ENCODE measurements at regions of chr1 and their contacts with region 1.

Region 1: DNA sequence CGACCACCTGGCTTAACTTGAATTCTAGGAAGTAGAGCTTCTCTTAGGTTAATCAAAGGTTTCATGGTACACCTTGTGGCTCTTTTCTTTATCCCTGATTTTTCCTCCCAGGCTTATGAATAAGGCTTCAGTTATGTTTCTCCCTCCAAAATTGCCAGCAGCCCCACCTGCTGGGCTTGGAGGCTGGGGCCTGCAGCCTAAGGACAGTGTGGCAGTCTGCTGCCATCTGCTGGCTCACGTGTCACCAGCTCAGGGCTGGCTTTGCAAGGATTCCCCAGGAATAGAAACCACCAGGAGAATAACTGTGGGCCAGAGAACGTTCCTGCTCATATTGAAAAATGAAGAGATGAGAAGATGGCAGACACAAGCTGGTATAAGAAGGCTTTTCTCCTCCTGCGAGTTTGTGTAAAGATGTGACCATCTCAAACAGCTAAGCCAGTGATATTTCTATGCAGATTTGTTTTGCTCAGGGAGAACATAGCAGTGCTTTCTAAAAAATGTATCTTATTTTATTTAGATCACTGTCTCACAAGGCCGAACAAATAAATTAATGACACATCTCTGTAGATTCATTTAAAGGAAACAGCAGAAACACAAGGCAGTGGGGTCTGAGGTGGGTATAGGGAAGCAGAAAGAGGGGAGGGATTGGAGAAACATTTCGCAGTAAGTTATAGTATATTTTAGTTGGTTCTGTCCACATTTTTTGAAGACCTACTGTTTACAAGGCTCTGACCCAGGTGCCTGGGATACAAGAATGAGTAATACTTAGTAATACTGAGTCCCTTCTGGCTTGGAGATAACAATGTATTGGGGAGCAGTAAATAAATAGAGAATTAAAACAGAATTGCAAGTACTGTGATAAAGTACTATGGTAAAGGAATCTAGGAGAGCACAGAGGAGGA is 291.1 kb upstream of the SGIP1 start:
- DNase-seq: peak; percentile 46 to 77 (median 60)
- H3K4me3 ChIP-seq: no peak overlapping the region
- H3K4me3 Mint-ChIP-seq: no peak overlapping the region
- H3K27ac ChIP-seq: no peak overlapping the region
- H3K27ac Mint-ChIP-seq: no peak overlapping the region
- H3K4me1 ChIP-seq: peaks cover 26% of the 10 kb centered on the region
- H3K4me1 Mint-ChIP-seq: peaks cover 0 to 29% (median 19%) of the 10 kb centered on the region in 3 donors
- H3K27me3 ChIP-seq: no peaks in the 10 kb centered on the region
- H3K27me3 Mint-ChIP-seq: peaks cover 7 to 8% of the 10 kb centered on the region in 2 donors

Region 2: DNA sequence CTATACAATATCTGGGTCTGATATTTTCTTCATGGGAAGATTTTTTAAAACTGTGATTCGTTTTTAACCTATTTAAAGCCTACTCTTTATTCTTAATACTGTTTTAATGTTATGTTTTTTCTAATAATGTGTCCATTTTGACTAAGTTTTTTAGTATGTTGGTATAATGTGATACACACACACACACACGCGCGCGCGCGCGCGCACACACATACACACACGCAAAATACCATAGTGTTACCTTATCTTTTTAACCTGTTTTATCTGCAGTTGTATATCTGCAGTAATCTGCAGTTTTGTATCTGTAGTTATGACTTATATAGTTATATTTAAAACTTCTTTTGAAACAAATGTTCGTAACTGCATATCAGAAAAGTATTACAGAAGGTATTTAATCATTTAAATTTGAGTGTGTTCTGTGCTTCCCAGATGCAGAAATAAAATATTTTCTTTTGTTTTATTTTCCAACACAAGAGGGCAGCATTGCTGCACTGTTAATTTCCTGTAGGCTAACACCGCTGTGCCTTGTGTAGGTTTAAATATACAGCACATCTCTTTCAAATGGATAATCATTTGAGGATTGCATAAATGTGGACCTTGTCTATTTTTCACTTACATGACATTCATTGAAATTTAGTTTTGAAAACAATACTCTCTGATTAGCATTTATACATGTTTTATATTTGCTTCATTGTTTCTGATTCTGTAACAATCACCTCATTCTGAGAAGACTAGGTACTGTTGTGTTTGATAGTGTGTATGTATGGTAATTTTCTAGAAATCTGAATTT is 284.1 kb before region 1 on chr1:
- CTCF ChIA-PET with region 1: interaction called, 52 read pairs
- POLR2A ChIA-PET with region 1: no interaction called
- DNase-seq: peak in 4 of 5 donors; percentile 4 to 56 (median 48)
- H3K4me3 ChIP-seq: no peak overlapping the region
- H3K4me3 Mint-ChIP-seq: no peak overlapping the region
- H3K27ac ChIP-seq: no peak overlapping the region
- H3K27ac Mint-ChIP-seq: no peak overlapping the region
- H3K4me1 ChIP-seq: no peaks in the 10 kb centered on the region
- H3K4me1 Mint-ChIP-seq: no peaks in the 10 kb centered on the region
- H3K27me3 ChIP-seq: no peaks in the 10 kb centered on the region
- H3K27me3 Mint-ChIP-seq: peaks cover 5 to 7% of the 10 kb centered on the region in 2 donors

Region 3: GRCh38 chr1:65965112-65966008 is 277.5 kb before region 1 on chr1:
- CTCF ChIA-PET with region 1: interaction called, 52 read pairs
- POLR2A ChIA-PET with region 1: no interaction called
- DNase-seq: no peak
- H3K4me3 ChIP-seq: no peak overlapping the region
- H3K4me3 Mint-ChIP-seq: no peak overlapping the region
- H3K27ac ChIP-seq: no peak overlapping the region
- H3K27ac Mint-ChIP-seq: no peak overlapping the region
- H3K4me1 ChIP-seq: no peaks in the 10 kb centered on the region
- H3K4me1 Mint-ChIP-seq: no peaks in the 10 kb centered on the region
- H3K27me3 ChIP-seq: no peaks in the 10 kb centered on the region
- H3K27me3 Mint-ChIP-seq: peaks cover 2 to 7% of the 10 kb centered on the region in 2 donors

Region 4: GRCh38 chr1:66223681-66224080 is 19.2 kb before region 1 on chr1:
- CTCF ChIA-PET with region 1: interaction called, 21 read pairs
- POLR2A ChIA-PET with region 1: no interaction called
- DNase-seq: no peak
- H3K4me3 ChIP-seq: no peak overlapping the region
- H3K4me3 Mint-ChIP-seq: no peak overlapping the region
- H3K27ac ChIP-seq: no peak overlapping the region
- H3K27ac Mint-ChIP-seq: no peak overlapping the region
- H3K4me1 ChIP-seq: no peaks in the 10 kb centered on the region
- H3K4me1 Mint-ChIP-seq: no peaks in the 10 kb centered on the region
- H3K27me3 ChIP-seq: no peaks in the 10 kb centered on the region
- H3K27me3 Mint-ChIP-seq: peaks cover 0 to 20% of the 10 kb centered on the region in 2 donors

Region 5: DNA sequence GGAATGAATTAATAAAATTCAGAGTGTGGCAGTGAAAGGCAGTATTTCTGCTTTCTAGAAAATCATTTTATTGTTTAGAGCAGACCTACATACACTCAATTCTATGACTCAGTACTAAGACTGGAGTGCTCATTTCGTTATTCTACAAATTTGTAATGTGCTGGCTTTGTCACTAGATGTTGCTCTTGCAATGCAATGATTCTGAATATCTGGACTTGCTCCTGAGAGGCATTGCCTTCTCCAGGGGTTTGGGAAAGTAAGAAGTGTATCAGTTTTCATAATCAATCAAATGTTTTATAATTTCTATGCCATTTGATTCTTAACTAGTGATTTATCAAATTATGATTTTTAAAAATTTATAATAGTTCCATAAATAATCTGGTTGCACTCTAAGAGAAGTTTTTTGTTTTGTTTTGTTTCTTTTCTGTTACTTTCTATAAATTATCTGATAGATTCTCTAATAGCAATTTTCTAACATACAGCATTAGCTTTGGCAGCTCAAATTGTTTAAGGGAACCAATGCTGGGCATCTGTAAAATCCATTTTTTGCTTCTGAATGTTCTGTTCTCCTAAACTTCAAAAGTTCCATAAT is 10.5 kb after region 1 on chr1:
- CTCF ChIA-PET with region 1: interaction called, 31 read pairs
- POLR2A ChIA-PET with region 1: no interaction called
- DNase-seq: peak in 2 of 5 donors; percentile 39 to 46
- H3K4me3 ChIP-seq: no peak overlapping the region
- H3K4me3 Mint-ChIP-seq: no peak overlapping the region
- H3K27ac ChIP-seq: no peak overlapping the region
- H3K27ac Mint-ChIP-seq: no peak overlapping the region
- H3K4me1 ChIP-seq: no peaks in the 10 kb centered on the region
- H3K4me1 Mint-ChIP-seq: peaks cover 9 to 35% (median 30%) of the 10 kb centered on the region in 3 donors
- H3K27me3 ChIP-seq: no peaks in the 10 kb centered on the region
- H3K27me3 Mint-ChIP-seq: no peaks in the 10 kb centered on the region

Region 6: DNA sequence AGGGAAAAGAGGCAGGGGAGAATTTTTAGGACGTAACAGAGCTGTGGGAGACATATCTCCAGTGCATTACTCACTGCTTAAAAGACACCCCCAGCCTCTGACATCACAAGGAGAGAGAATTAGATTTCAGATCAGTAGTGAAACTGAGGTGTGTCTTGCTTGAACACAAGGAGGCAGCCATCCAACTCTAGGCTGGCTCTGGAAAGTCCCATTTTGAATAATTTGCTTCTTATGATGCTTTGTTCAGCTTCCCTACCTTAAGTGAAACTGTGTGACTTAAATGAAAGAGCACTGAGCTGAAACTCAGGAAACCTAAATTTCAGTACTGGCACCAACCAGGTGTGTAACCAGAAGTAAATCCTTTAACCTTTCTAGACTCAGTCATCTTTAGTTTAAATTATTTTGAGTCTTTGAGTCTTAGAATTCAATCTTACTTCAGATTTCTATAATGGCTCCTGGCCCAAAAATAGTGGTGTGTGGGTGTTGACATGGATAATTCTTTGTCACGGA is 39.5 kb after region 1 on chr1:
- CTCF ChIA-PET with region 1: no interaction called
- POLR2A ChIA-PET with region 1: no interaction called
- DNase-seq: peak; percentile 12 to 76 (median 57)
- H3K4me3 ChIP-seq: no peak overlapping the region
- H3K4me3 Mint-ChIP-seq: peak overlapping the region in 3 of 7 donors; percentile 2 to 18 (median 6)
- H3K27ac ChIP-seq: no peak overlapping the region
- H3K27ac Mint-ChIP-seq: peak overlapping the region; percentile 50 to 90 (median 86)
- H3K4me1 ChIP-seq: peaks cover 72% of the 10 kb centered on the region
- H3K4me1 Mint-ChIP-seq: peaks cover 70 to 95% (median 94%) of the 10 kb centered on the region in 3 donors
- H3K27me3 ChIP-seq: no peaks in the 10 kb centered on the region
- H3K27me3 Mint-ChIP-seq: no peaks in the 10 kb centered on the region

Region 7: GRCh38 chr1:66436378-66437145 is 193.7 kb after region 1 on chr1:
- CTCF ChIA-PET with region 1: interaction called, 272 read pairs
- POLR2A ChIA-PET with region 1: no interaction called
- DNase-seq: peak in 3 of 5 donors; percentile 19 to 50 (median 21)
- H3K4me3 ChIP-seq: no peak overlapping the region
- H3K4me3 Mint-ChIP-seq: no peak overlapping the region
- H3K27ac ChIP-seq: no peak overlapping the region
- H3K27ac Mint-ChIP-seq: peak overlapping the region in 5 of 8 donors; percentile 9 to 57 (median 21)
- H3K4me1 ChIP-seq: no peaks in the 10 kb centered on the region
- H3K4me1 Mint-ChIP-seq: peaks cover 5 to 20% (median 17%) of the 10 kb centered on the region in 3 donors
- H3K27me3 ChIP-seq: no peaks in the 10 kb centered on the region
- H3K27me3 Mint-ChIP-seq: peaks cover 0 to 3% of the 10 kb centered on the region in 2 donors

Region 8: DNA sequence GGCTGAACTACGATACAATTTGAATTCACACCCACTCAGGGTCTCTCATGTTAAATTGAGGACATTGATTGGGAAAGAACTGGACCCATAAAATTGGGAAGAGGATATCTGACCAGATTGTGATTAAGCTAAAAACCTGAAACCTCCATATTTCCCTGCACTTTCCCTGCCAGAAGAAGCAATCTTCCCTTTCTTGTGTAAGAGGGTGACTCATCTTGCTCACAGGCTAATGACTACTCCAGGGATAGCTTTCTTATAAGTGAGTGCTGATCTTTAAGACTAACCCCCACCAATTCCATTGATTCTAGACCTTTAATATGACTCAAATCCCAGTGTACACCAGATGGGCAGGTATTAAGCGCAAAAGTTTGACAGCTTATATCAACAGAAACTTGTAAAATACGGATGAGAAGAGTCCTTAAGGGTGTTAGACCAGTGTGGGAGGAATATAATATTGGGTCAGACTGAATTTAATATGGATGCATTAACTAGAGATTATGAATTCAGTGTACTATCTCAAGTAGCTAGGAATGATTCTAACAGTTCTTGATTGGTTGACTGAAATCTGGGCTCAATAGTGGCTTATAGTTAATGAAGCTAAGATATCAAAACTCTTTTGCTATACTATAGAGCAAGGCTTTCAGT is 278.9 kb after region 1 on chr1:
- CTCF ChIA-PET with region 1: no interaction called
- POLR2A ChIA-PET with region 1: no interaction called
- DNase-seq: no peak
- H3K4me3 ChIP-seq: no peak overlapping the region
- H3K4me3 Mint-ChIP-seq: no peak overlapping the region
- H3K27ac ChIP-seq: no peak overlapping the region
- H3K27ac Mint-ChIP-seq: no peak overlapping the region
- H3K4me1 ChIP-seq: no peaks in the 10 kb centered on the region
- H3K4me1 Mint-ChIP-seq: no peaks in the 10 kb centered on the region
- H3K27me3 ChIP-seq: no peaks in the 10 kb centered on the region
- H3K27me3 Mint-ChIP-seq: peaks cover 0 to 2% of the 10 kb centered on the region in 2 donors

Measured in CD8-positive, alpha-beta memory T cell (primary cell).